ENCODE measurements at regions of chr11 and their contacts with region 1.

Region 1: GRCh38 chr11:12043959-12044819 is 35.8 kb upstream of the DKK3 start:
- DNase-seq: peak; percentile 73 to 84 (median 78)
- ATAC-seq: peak; percentile 91
- H3K4me3 ChIP-seq: no peak overlapping the region
- H3K27ac ChIP-seq: no peak overlapping the region; the same call in 2 of the 3 replicates
- H3K4me1 ChIP-seq: peaks cover 0 to 12% of the 10 kb centered on the region in 2 experiments; a peak in 3 of 5 replicates
- H3K27me3 ChIP-seq: no peaks in the 10 kb centered on the region
- CTCF ChIP-seq: peak; percentile 85 to 92 (median 90)
- EP300 ChIP-seq: no peak
- POLR2A ChIP-seq: no peak
- RAD21 ChIP-seq: peak; percentile 95 to 97

Region 2: DNA sequence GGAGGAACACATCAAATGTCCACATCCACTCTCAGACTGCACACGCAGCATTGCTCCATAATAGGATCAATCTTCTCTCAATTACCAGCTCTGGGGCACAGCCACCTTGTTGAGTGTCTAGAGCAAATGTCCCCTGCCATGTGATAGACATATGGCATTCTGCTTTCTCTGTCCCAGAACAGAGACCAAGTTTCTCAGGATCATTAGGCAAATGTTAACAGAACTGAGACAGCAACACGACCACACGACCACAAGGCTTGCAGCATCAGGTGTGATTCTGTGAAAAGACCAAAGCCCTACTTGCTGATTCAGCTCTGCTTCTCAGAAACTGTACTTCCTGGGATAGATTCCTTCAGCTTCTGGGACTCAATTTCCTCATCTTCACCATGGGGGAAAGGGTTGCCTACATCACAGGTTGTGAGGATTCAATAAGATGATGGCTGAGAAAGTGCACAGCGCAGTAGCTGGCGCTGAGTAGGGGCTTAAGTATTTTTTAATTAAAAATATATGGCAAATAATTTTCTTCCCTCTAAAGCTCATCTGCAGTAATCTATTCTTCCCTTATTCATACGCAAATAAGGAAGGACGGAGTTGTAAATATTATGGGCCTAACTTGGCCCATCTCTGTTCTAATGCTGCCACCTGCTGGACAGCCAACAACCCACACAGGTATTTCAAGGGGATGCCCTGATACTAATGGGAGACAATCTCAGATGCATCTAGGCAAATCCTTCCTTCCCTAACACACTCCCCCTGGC is 256.7 kb before region 1 on chr11:
- CTCF ChIA-PET with region 1: interaction called, 14 read pairs
- POLR2A ChIA-PET with region 1: no interaction called
- in situ Hi-C with region 1: no loop called
- intact Hi-C with region 1: loop called (anchors 1 kb)
- DNase-seq: peak; percentile 63 to 77 (median 66)
- ATAC-seq: peak; percentile 97
- H3K4me3 ChIP-seq: no peak overlapping the region
- H3K27ac ChIP-seq: no peak overlapping the region
- H3K4me1 ChIP-seq: no peaks in the 10 kb centered on the region
- H3K27me3 ChIP-seq: peaks cover 0 to 3% of the 10 kb centered on the region in 2 experiments; a peak in 1 of 5 replicates
- CTCF ChIP-seq: peak; percentile 81 to 95 (median 83)
- EP300 ChIP-seq: no peak
- POLR2A ChIP-seq: no peak
- RAD21 ChIP-seq: peak; percentile 86 to 90

Region 3: GRCh38 chr11:11931461-11932055 is 112.6 kb before region 1 on chr11:
- CTCF ChIA-PET with region 1: interaction called, 15 read pairs
- POLR2A ChIA-PET with region 1: no interaction called
- in situ Hi-C with region 1: no loop called
- intact Hi-C with region 1: loop called (anchors 1 kb)
- DNase-seq: peak; percentile 26 to 59 (median 34)
- ATAC-seq: peak; percentile 85
- H3K4me3 ChIP-seq: no peak overlapping the region
- H3K27ac ChIP-seq: no peak overlapping the region
- H3K4me1 ChIP-seq: no peaks in the 10 kb centered on the region
- H3K27me3 ChIP-seq: no peaks in the 10 kb centered on the region
- CTCF ChIP-seq: peak in 2 of 3 experiments; percentile 52 to 57; a peak in 5 of 6 replicates
- EP300 ChIP-seq: no peak
- POLR2A ChIP-seq: no peak
- RAD21 ChIP-seq: peak in 1 of 2 experiments; percentile 62; a peak in 2 of 4 replicates

Region 4: GRCh38 chr11:11993839-11994238 is 50.4 kb before region 1 on chr11:
- CTCF ChIA-PET with region 1: no interaction called
- POLR2A ChIA-PET with region 1: no interaction called
- in situ Hi-C with region 1: no loop called
- intact Hi-C with region 1: loop called (anchors 5 kb)
- DNase-seq: peak in 1 of 4 experiments; percentile 25
- ATAC-seq: peak; percentile 45; the same call in 2 of the 3 replicates
- H3K4me3 ChIP-seq: no peak overlapping the region
- H3K27ac ChIP-seq: no peak overlapping the region
- H3K4me1 ChIP-seq: no peaks in the 10 kb centered on the region; a peak in 1 of 5 replicates
- H3K27me3 ChIP-seq: peaks cover 51 to 62% of the 10 kb centered on the region in 2 experiments
- CTCF ChIP-seq: no peak
- EP300 ChIP-seq: no peak
- POLR2A ChIP-seq: no peak
- RAD21 ChIP-seq: no peak

Region 5: GRCh38 chr11:12281571-12282478 is 237.6 kb after region 1 on chr11:
- CTCF ChIA-PET with region 1: interaction called, 110 read pairs
- POLR2A ChIA-PET with region 1: interaction called, 5 read pairs
- in situ Hi-C with region 1: loop called (anchors 5 kb)
- intact Hi-C with region 1: loop called (anchors 1 kb)
- DNase-seq: peak; percentile 86 to 88 (median 87)
- ATAC-seq: peak; percentile 89
- H3K4me3 ChIP-seq: no peak overlapping the region
- H3K27ac ChIP-seq: no peak overlapping the region
- H3K4me1 ChIP-seq: peaks cover 8 to 13% of the 10 kb centered on the region in 2 experiments; a peak in 4 of 5 replicates
- H3K27me3 ChIP-seq: no peaks in the 10 kb centered on the region; a peak in 1 of 5 replicates
- CTCF ChIP-seq: peak; percentile 92 to 98 (median 98)
- EP300 ChIP-seq: no peak
- POLR2A ChIP-seq: no peak
- RAD21 ChIP-seq: peak; percentile 99

Measured in K562 (cell line).